Heart left ventricle (tissue), 16 donors: ENCODE measurements at regions of chr15 and their contacts with region 1.

Region 1: GRCh38 chr15:46014532-46014931 is 379.7 kb downstream of the SQOR start:
- DNase-seq: peak in 1 of 5 donors; percentile 32
- ATAC-seq: no peak
- H3K4me3 ChIP-seq: no peak overlapping the region
- H3K27ac ChIP-seq: no peak overlapping the region
- H3K4me1 ChIP-seq: no peaks in the 10 kb centered on the region
- H3K27me3 ChIP-seq: no peaks in the 10 kb centered on the region
- CTCF ChIP-seq: no peak
- POLR2A ChIP-seq: no peak

Region 2: DNA sequence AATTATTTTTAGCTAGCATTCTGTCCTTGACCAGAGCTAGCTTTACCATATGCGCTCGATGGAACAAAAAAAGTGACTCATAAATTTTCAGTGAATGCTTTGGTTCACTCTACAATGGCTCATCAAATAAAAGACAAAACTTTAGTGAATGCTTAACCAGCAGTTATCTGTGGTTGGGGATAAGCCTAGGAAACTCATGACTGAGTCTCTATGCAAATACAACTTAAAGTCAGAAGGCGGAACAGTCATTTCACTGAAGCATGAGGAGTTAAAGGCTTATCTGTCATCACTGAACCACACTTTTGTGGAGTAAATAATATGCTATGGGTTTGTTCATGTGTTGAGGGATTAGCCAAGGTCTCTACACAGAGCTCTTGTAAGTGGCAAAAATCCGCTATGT is 71.3 kb before region 1 on chr15:
- intact Hi-C with region 1: no loop called
- DNase-seq: no peak
- ATAC-seq: no peak
- H3K4me3 ChIP-seq: no peak overlapping the region
- H3K27ac ChIP-seq: no peak overlapping the region
- H3K4me1 ChIP-seq: no peaks in the 10 kb centered on the region
- H3K27me3 ChIP-seq: no peaks in the 10 kb centered on the region
- CTCF ChIP-seq: no peak
- POLR2A ChIP-seq: no peak

Region 3: GRCh38 chr15:45958922-45959321 is 55.6 kb before region 1 on chr15:
- intact Hi-C with region 1: loop called in 1 of 10 experiments (anchors 10 kb)
- DNase-seq: no peak
- ATAC-seq: no peak
- H3K4me3 ChIP-seq: no peak overlapping the region
- H3K27ac ChIP-seq: no peak overlapping the region
- H3K4me1 ChIP-seq: no peaks in the 10 kb centered on the region
- H3K27me3 ChIP-seq: no peaks in the 10 kb centered on the region
- CTCF ChIP-seq: no peak
- POLR2A ChIP-seq: no peak

Region 4: DNA sequence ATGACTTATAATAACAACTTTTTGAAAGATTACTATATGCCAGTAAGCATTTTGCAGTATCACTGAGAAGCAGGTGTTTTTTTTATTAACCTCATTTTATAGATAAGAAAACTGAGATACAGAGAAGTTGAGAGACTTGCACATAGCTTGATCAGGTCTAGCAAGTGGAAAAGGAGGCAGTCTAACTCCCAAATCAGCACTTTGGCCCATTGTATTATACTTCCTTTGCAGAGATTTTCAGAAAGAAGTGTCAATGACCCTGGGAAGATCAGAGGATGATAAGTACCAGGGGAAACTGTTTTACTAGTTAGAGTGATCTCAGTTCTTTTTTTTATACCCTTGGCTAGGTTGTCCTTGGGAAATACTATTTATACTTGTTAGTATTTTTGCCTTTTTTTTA is 21.0 kb before region 1 on chr15:
- intact Hi-C with region 1: no loop called
- DNase-seq: no peak
- ATAC-seq: peak; percentile 28 to 85 (median 51)
- H3K4me3 ChIP-seq: no peak overlapping the region
- H3K27ac ChIP-seq: no peak overlapping the region
- H3K4me1 ChIP-seq: peaks cover 0 to 14% (median 0%) of the 10 kb centered on the region in 12 donors
- H3K27me3 ChIP-seq: no peaks in the 10 kb centered on the region
- CTCF ChIP-seq: no peak
- POLR2A ChIP-seq: no peak

Region 5: GRCh38 chr15:46059921-46060594 is 45.5 kb after region 1 on chr15:
- intact Hi-C with region 1: loop called in 1 of 10 experiments (anchors 10 kb)
- DNase-seq: peak in 1 of 5 donors; percentile 25
- ATAC-seq: peak in 1 of 4 donors; percentile 27
- H3K4me3 ChIP-seq: no peak overlapping the region
- H3K27ac ChIP-seq: no peak overlapping the region
- H3K4me1 ChIP-seq: peaks cover 0 to 14% (median 2%) of the 10 kb centered on the region in 12 donors
- H3K27me3 ChIP-seq: no peaks in the 10 kb centered on the region
- CTCF ChIP-seq: no peak
- POLR2A ChIP-seq: no peak